Activated CD8-positive, alpha-beta T cell treated with anti-CD3 and anti-CD28 coated beads for 36 hours (primary cell): ENCODE measurements at regions of chr6 and their contacts with region 1.

Region 1: GRCh38 chr6:149028767-149029405 is 282.1 kb downstream of the UST start:
- DNase-seq: peak; percentile 74
- ATAC-seq: no peak
- H3K4me3 Mint-ChIP-seq: peak overlapping the region; percentile 10
- H3K27ac Mint-ChIP-seq: no peak overlapping the region
- H3K4me1 Mint-ChIP-seq: peaks cover 46% of the 10 kb centered on the region
- H3K27me3 Mint-ChIP-seq: no peaks in the 10 kb centered on the region
- CTCF ChIP-seq: peak; percentile 78

Region 2: GRCh38 chr6:148835920-148836441 is 192.9 kb before region 1 on chr6:
- CTCF ChIA-PET with region 1: no interaction called
- POLR2A ChIA-PET with region 1: no interaction called
- intact Hi-C with region 1: no loop called
- DNase-seq: peak; percentile 48
- ATAC-seq: peak; percentile 78
- H3K4me3 Mint-ChIP-seq: peak overlapping the region; percentile 44
- H3K27ac Mint-ChIP-seq: peak overlapping the region; percentile 88
- H3K4me1 Mint-ChIP-seq: peaks cover 18% of the 10 kb centered on the region
- H3K27me3 Mint-ChIP-seq: peaks cover 5% of the 10 kb centered on the region
- CTCF ChIP-seq: no peak

Region 3: DNA sequence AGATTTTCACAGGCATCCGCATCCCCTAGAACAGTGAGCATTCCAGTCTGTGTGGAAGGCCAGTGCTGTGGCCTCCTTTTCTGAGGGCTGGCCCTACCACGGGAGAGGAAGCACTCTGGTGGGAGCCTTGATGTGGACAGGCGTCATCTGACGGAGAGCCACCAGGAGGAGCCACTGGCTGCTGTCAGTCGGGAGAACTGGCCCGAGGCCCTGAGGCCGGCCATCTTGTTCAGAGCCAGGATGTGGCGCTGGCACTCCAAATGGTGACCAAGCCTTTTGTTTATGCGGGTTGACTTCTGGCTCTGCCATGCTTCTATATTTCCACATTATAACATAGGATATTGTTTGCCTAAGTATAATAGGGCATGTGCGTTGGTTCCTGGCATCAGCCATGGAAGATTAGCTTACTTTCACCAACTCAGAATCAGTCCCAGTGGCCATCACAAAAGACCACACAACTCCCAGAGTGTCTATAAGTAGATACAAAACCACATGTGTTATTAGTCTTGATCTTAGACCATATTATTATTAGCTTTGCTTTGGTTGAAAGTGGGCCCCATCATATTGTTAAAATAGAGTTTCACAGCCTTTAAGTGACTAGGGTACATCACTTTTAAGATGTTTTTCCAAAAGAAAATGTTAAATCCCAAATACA is 14.7 kb after region 1 on chr6:
- CTCF ChIA-PET with region 1: interaction called, 24 read pairs
- POLR2A ChIA-PET with region 1: interaction called, 17 read pairs
- intact Hi-C with region 1: no loop called
- DNase-seq: peak; percentile 67
- ATAC-seq: peak; percentile 40
- H3K4me3 Mint-ChIP-seq: no peak overlapping the region
- H3K27ac Mint-ChIP-seq: no peak overlapping the region
- H3K4me1 Mint-ChIP-seq: peaks cover 41% of the 10 kb centered on the region
- H3K27me3 Mint-ChIP-seq: no peaks in the 10 kb centered on the region
- CTCF ChIP-seq: peak; percentile 43

Region 4: GRCh38 chr6:149065658-149066556 is 37.0 kb after region 1 on chr6:
- CTCF ChIA-PET with region 1: interaction called, 16 read pairs
- POLR2A ChIA-PET with region 1: interaction called, 14 read pairs
- intact Hi-C with region 1: no loop called
- DNase-seq: peak; percentile 69
- ATAC-seq: peak; percentile 97
- H3K4me3 Mint-ChIP-seq: peak overlapping the region; percentile 3
- H3K27ac Mint-ChIP-seq: peak overlapping the region; percentile 85
- H3K4me1 Mint-ChIP-seq: peaks cover 32% of the 10 kb centered on the region
- H3K27me3 Mint-ChIP-seq: no peaks in the 10 kb centered on the region
- CTCF ChIP-seq: no peak

Region 5: GRCh38 chr6:149082286-149082707 is 53.4 kb after region 1 on chr6:
- CTCF ChIA-PET with region 1: interaction called, 47 read pairs
- POLR2A ChIA-PET with region 1: interaction called, 19 read pairs
- intact Hi-C with region 1: loop called (anchors 2 kb)
- DNase-seq: peak; percentile 97
- ATAC-seq: peak; percentile 86
- H3K4me3 Mint-ChIP-seq: no peak overlapping the region
- H3K27ac Mint-ChIP-seq: no peak overlapping the region
- H3K4me1 Mint-ChIP-seq: peaks cover 50% of the 10 kb centered on the region
- H3K27me3 Mint-ChIP-seq: no peaks in the 10 kb centered on the region
- CTCF ChIP-seq: peak; percentile 81

Region 6: DNA sequence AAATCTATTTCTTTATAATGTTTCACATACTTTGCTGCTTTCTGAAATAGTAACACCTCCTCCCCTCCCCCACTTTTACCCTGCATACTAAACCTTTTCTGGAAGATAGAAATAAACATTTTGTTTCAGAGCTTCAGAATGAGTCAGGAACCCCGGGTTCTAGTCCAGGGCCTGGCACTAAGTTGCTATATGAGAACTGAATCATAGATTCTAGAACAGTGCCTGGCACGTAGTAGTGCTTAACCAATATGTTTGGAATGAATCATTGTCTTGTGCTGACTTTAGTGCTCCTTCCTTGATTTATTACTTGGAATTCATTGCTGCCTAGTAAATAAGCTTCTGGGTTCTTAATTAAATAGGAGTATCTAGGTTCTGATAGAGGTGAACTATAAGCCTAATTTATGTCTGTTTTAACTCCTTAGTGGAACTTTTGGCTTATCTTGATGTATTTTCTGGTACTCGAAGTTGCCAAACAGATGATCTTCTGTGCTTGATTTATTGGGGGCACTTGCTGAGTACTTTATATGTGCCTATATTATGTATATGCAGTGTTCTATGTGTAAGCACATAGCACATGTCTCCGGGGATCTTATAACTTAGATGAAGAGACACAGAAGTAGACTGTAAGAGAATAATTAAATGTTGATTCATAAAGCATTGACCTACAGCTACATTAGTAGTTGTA is 307.2 kb after region 1 on chr6:
- CTCF ChIA-PET with region 1: interaction called, 3 read pairs
- POLR2A ChIA-PET with region 1: interaction called, 3 read pairs
- intact Hi-C with region 1: loop called (anchors 5 kb)
- DNase-seq: peak; percentile 82
- ATAC-seq: peak; percentile 91
- H3K4me3 Mint-ChIP-seq: peak overlapping the region; percentile 45
- H3K27ac Mint-ChIP-seq: peak overlapping the region; percentile 95
- H3K4me1 Mint-ChIP-seq: peaks cover 87% of the 10 kb centered on the region
- H3K27me3 Mint-ChIP-seq: no peaks in the 10 kb centered on the region
- CTCF ChIP-seq: no peak